Activated T-helper 1 cell treated with anti-CD3 and anti-CD28 coated beads, Interleukin-12 subunit alpha, Interleukin-12 subunit beta, Interleukin-2, Interleukin-4 antibody, amounts not matched to agents 30 ng/mL and 10 ng/mL and 1 ng/mL, durations not matched to agents 14 hours and 24 hours and 36 hours (primary cell): ENCODE measurements at regions of chr6 and their contacts with region 1.

Region 1: DNA sequence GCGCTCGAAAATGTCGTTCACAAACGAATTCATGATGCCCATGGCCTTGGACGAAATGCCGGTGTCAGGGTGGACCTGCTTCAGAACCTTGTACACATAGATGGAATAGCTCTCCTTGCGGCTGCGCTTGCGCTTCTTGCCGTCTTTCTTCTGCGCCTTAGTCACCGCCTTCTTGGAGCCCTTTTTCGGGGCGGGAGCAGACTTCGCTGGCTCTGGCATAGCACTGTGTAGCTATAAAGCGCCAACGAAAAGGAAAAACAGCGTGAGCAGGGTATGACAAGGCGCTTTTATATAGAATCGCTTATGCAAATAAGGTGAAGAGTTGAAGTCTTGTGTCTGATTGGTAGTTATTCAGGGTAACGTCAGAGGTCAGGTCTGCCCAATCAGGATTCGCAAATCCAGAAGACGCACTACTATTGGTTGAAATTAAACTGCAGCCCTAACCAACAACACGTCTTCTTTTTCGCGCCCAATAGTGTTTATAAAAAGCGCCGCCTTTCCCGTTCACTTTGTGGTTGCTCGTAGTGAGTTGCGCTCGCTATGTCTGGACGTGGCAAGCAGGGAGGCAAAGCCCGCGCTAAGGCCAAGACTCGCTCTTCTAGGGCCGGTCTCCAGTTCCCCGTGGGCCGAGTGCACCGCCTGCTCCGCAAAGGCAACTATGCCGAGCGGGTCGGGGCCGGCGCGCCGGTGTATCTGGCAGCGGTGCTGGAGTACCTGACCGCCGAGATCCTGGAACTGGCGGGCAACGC is 114.8 kb upstream of the PRSS16 start:
- DNase-seq: peak; percentile 92
- H3K4me3 Mint-ChIP-seq: no peak overlapping the region
- H3K27ac Mint-ChIP-seq: no peak overlapping the region
- H3K4me1 Mint-ChIP-seq: peaks cover 34% of the 10 kb centered on the region
- H3K27me3 Mint-ChIP-seq: no peaks in the 10 kb centered on the region

Region 2: DNA sequence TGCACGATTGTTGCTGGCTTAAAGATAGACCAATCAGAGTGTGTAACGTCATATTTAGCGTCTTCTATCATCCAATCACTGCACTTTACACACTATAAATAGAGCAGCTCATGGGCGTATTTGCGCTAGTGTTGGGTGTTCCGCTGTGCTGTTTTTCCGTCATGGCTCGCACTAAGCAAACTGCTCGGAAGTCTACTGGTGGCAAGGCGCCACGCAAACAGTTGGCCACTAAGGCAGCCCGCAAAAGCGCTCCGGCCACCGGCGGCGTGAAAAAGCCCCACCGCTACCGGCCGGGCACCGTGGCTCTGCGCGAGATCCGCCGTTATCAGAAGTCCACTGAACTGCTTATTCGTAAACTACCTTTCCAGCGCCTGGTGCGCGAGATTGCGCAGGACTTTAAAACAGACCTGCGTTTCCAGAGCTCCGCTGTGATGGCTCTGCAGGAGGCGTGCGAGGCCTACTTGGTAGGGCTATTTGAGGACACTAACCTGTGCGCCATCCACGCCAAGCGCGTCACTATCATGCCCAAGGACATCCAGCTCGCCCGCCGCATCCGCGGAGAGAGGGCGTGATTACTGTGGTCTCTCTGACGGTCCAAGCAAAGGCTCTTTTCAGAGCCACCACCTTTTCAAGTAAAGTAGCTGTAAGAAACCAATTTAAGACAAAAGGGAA is 1112.2 kb before region 1 on chr6:
- intact Hi-C with region 1: loop called (anchors 1 kb)
- DNase-seq: peak; percentile 80
- H3K4me3 Mint-ChIP-seq: peak overlapping the region; percentile 98
- H3K27ac Mint-ChIP-seq: peak overlapping the region; percentile 100
- H3K4me1 Mint-ChIP-seq: peaks cover 61% of the 10 kb centered on the region
- H3K27me3 Mint-ChIP-seq: peaks cover 2% of the 10 kb centered on the region

Region 3: GRCh38 chr6:26156076-26156849 is 976.4 kb before region 1 on chr6:
- intact Hi-C with region 1: loop called (anchors 1 kb)
- DNase-seq: peak; percentile 89
- H3K4me3 Mint-ChIP-seq: peak overlapping the region; percentile 91
- H3K27ac Mint-ChIP-seq: peak overlapping the region; percentile 95
- H3K4me1 Mint-ChIP-seq: peaks cover 56% of the 10 kb centered on the region
- H3K27me3 Mint-ChIP-seq: peaks cover 3% of the 10 kb centered on the region

Region 4: DNA sequence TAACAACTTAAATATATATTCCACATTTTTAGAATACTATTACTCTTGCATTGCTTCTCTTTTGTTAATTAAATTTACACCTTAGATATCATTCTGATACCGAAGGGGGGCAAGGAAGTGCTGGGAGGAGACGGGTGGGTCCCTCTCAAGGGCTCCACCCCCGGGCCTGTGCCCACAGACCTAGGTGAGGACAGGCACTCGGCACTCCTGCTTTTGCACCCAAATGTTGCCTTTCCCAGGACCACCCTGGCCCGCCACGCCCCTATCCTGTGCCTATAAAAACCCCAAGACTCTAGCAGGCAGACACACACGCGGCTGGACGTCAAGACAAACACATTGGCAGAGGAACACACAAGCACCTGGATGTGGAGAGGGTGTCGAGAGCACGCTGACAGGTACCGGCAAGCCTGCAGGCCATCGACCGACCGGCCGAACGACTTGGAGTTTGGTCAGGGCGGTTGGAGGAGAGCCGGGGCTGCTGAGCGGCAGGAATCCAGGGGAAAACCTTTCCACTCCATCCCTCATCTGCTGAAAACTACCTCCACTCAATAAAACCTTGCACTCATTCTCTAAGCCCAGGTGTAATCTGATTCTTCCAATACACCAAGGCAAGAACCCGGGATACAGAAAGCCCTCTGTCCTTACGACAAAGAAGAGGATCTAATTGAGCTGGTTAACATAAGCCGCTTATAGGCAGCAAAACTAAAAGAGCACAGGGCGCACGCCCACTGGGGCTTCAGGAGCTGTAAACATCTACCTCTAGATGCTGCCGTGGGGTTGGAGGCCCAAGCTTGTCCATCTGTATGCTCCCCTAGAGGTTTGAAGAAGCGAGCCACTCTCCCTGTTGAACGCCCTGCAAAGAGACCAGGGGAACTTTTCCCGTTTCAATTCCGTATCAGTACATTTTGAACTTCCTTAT is 82.6 kb before region 1 on chr6:
- intact Hi-C with region 1: no loop called
- DNase-seq: no peak
- H3K4me3 Mint-ChIP-seq: no peak overlapping the region
- H3K27ac Mint-ChIP-seq: no peak overlapping the region
- H3K4me1 Mint-ChIP-seq: no peaks in the 10 kb centered on the region
- H3K27me3 Mint-ChIP-seq: peaks cover 3% of the 10 kb centered on the region

Region 5: DNA sequence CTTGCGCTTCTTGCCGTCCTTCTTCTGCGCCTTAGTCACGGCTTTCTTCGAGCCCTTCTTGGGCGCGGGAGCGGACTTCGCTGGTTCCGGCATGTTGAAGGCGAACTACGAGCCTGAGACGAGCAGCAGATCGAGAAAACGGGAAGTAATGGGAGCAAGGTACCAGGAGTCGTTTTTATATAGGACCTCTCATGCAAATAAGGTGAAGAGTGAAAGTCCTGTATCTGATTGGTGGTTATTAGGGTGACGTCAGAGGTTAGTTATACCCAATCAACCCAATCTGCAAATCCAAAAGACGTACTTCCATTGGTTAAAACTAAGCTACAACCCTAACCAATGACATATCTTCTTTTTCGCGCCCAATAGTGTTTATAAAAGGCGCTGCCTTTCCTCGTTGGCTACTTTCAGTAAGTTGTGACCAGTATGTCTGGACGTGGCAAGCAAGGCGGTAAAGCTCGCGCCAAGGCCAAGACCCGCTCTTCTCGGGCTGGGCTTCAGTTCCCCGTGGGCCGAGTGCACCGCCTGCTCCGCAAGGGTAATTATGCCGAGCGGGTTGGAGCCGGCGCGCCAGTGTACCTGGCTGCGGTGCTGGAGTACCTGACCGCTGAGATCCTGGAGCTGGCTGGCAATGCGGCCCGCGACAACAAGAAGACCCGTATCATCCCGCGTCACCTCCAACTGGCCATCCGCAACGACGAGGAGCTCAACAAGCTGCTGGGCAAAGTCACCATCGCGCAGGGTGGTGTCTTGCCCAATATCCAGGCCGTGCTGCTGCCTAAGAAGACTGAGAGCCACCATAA is 14.2 kb after region 1 on chr6:
- intact Hi-C with region 1: loop called (anchors 1 kb)
- DNase-seq: peak; percentile 82
- H3K4me3 Mint-ChIP-seq: no peak overlapping the region
- H3K27ac Mint-ChIP-seq: no peak overlapping the region
- H3K4me1 Mint-ChIP-seq: peaks cover 17% of the 10 kb centered on the region
- H3K27me3 Mint-ChIP-seq: no peaks in the 10 kb centered on the region

Region 6: DNA sequence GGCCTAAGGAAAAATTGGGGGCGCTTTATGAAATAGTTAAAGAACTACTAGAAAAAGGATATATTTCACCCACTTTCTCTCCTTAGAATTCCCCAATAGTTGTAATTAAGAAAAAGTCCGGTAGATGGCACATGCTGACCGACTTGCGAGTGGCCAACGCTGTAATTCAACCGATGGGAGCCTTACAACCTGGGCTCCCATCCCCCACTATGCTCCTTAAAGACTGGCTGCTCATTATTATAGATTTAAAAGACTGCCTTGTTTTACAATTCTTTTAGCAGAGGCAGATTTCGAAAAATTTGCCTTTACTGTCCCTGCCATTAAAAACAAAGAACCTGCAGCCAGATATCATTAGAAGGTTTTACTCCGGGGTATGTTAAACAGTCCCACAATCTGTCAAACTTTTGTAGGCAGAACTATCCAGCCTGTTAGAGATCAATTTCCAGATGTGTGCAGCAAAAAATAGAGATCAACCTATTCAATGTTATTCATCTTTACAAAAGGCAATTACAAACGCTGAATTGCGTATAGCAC is 56.2 kb after region 1 on chr6:
- intact Hi-C with region 1: loop called (anchors 2 kb)
- DNase-seq: peak; percentile 25
- H3K4me3 Mint-ChIP-seq: peak overlapping the region; percentile 93
- H3K27ac Mint-ChIP-seq: no peak overlapping the region
- H3K4me1 Mint-ChIP-seq: peaks cover 15% of the 10 kb centered on the region
- H3K27me3 Mint-ChIP-seq: peaks cover 4% of the 10 kb centered on the region

Region 7: GRCh38 chr6:27838058-27838944 is 705.6 kb after region 1 on chr6:
- intact Hi-C with region 1: loop called (anchors 1 kb)
- DNase-seq: peak; percentile 83
- H3K4me3 Mint-ChIP-seq: no peak overlapping the region
- H3K27ac Mint-ChIP-seq: no peak overlapping the region
- H3K4me1 Mint-ChIP-seq: peaks cover 25% of the 10 kb centered on the region
- H3K27me3 Mint-ChIP-seq: no peaks in the 10 kb centered on the region

Region 8: DNA sequence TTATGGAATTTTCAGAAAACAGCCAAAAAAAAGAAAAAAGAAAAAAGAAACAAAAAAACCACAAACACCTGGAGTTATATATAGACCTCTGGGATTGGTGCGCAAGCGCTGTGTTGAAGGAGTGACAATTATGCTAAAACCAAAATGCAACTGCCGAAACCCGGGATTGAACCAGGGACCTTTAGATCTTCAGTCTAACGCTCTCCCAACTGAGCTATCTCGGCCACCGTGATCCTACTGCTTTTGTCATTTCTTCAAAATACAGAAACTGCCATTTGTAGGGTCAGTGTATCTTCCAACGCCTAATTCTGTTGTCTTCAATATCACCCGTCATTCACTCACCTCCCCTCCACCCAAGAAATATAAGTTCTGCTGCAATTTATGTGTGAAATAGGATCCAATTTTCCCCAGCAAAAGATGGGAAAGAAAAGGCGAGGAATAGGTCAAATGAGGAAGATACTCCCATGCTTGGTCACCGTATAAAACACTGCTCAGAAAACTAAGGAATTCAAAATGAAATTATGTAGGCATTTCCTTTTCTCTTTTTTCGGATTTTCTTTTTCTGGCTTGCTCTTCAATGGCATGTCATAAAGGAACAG is 1675.1 kb after region 1 on chr6:
- intact Hi-C with region 1: no loop called
- DNase-seq: no peak
- H3K4me3 Mint-ChIP-seq: no peak overlapping the region
- H3K27ac Mint-ChIP-seq: peak overlapping the region; percentile 18
- H3K4me1 Mint-ChIP-seq: peaks cover 26% of the 10 kb centered on the region
- H3K27me3 Mint-ChIP-seq: peaks cover 92% of the 10 kb centered on the region